ENCODE measurements at regions of chr15 and their contacts with region 1.

Region 1: DNA sequence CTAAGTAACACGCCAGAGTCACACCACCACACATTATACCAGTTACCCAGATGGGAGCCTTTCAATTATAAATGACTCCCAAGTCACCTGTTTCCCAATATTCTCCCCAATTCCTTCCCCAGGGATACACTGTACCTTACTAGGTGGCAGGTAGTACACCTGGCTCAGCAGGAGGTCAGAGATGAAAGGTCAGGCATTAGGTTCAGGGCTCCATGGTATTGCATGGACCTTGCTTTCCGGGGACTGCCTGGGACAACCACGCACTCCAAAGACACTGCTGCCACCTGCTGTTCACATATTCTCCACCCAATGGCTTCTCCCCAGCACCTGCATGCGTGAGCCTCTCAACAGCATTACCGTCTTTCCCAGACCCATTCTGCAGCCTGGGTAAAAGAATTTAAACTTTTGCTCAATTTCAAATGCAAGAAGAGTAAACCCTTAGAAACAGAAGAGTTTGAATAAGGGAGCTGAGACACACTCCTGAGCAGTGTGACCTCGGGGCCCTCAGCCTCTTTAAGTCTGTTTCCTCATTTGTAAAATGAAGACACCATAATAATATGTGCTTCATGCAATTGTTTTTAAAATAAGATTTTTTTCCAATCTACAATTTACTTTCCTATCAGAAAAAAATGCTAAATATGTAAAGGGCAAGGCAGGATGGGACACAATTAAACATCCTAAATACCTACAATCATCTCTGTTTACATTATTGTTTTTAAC is 28.0 kb upstream of the LACTB start:
- DNase-seq: peak; percentile 60
- H3K4me3 ChIP-seq: no peak overlapping the region
- H3K27ac ChIP-seq: no peak overlapping the region
- H3K4me1 ChIP-seq: peaks cover 9% of the 10 kb centered on the region
- H3K27me3 ChIP-seq: no peaks in the 10 kb centered on the region
- CTCF ChIP-seq: peak; percentile 77 to 96

Region 2: GRCh38 chr15:62549345-62549970 is 544.2 kb before region 1 on chr15:
- CTCF ChIA-PET with region 1: no interaction called
- dilution Hi-C with region 1: no loop called
- in situ Hi-C with region 1: no loop called
- intact Hi-C with region 1: loop called (anchors 2 kb)
- DNase-seq: peak; percentile 9
- H3K4me3 ChIP-seq: no peak overlapping the region
- H3K27ac ChIP-seq: no peak overlapping the region
- H3K4me1 ChIP-seq: peaks cover 8% of the 10 kb centered on the region
- H3K27me3 ChIP-seq: no peaks in the 10 kb centered on the region
- CTCF ChIP-seq: peak; percentile 73 to 85

Region 3: GRCh38 chr15:62782039-62782791 is 311.4 kb before region 1 on chr15:
- CTCF ChIA-PET with region 1: no interaction called
- dilution Hi-C with region 1: no loop called
- in situ Hi-C with region 1: no loop called
- intact Hi-C with region 1: loop called (anchors 1 kb)
- DNase-seq: peak; percentile 64
- H3K4me3 ChIP-seq: no peak overlapping the region
- H3K27ac ChIP-seq: no peak overlapping the region
- H3K4me1 ChIP-seq: peaks cover 10% of the 10 kb centered on the region
- H3K27me3 ChIP-seq: no peaks in the 10 kb centered on the region
- CTCF ChIP-seq: peak; percentile 79 to 81

Region 4: GRCh38 chr15:63006032-63006878 is 87.4 kb before region 1 on chr15:
- CTCF ChIA-PET with region 1: no interaction called
- dilution Hi-C with region 1: no loop called
- in situ Hi-C with region 1: no loop called
- intact Hi-C with region 1: loop called (anchors 1 kb)
- DNase-seq: peak; percentile 31
- H3K4me3 ChIP-seq: no peak overlapping the region
- H3K27ac ChIP-seq: no peak overlapping the region
- H3K4me1 ChIP-seq: peaks cover 14% of the 10 kb centered on the region
- H3K27me3 ChIP-seq: no peaks in the 10 kb centered on the region
- CTCF ChIP-seq: no peak

Region 5: DNA sequence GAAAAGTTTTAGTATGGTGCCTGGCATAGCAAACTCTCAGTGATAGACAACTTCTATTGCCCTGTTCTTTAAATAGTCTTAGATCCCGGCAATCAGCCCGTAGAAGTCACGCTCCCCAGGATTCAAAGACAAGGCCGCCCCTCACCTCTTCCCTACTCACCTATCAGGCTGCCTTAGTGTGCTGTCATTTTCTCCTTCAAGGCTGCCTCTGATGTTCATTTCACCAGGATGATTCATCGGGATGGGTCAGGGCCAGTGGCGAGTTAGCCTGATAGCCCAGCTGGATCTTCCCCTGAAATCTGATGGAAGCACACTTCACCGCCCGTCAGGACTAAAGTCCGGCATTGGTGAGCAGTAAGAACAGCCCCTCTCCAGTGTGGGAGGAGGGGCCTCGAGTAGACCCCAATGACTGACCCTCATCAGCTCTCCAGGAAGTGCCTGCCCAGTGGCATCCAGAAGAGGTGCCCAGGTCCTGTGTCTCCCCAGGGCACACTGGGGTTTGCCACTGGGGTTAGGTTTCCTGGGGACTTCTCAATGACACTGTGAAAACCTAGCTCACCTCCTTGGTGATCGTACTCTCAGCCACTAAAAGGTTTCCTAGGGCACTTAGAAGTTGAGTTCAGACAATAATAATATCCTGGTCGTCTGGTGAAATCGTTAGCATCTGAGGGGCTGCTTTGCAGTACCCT is 13.6 kb before region 1 on chr15:
- CTCF ChIA-PET with region 1: no interaction called
- dilution Hi-C with region 1: no loop called
- in situ Hi-C with region 1: no loop called
- intact Hi-C with region 1: no loop called
- DNase-seq: peak; percentile 53
- H3K4me3 ChIP-seq: no peak overlapping the region
- H3K27ac ChIP-seq: no peak overlapping the region
- H3K4me1 ChIP-seq: peaks cover 12% of the 10 kb centered on the region
- H3K27me3 ChIP-seq: no peaks in the 10 kb centered on the region
- CTCF ChIP-seq: no peak